ENCODE measurements at regions of chr9 and their contacts with region 1.

Region 1: GRCh38 chr9:127130661-127131538 is 8.5 kb upstream of the ANGPTL2 start:
- DNase-seq: peak; percentile 44
- H3K4me3 ChIP-seq: no peak overlapping the region
- H3K27ac ChIP-seq: peak overlapping the region; percentile 80 to 85 (median 82)
- H3K4me1 ChIP-seq: peaks cover 7 to 45% (median 20%) of the 10 kb centered on the region in 4 donors
- H3K27me3 ChIP-seq: no peaks in the 10 kb centered on the region
- CTCF ChIP-seq: no peak
- EP300 ChIP-seq: no peak
- POLR2A ChIP-seq: no peak

Region 2: DNA sequence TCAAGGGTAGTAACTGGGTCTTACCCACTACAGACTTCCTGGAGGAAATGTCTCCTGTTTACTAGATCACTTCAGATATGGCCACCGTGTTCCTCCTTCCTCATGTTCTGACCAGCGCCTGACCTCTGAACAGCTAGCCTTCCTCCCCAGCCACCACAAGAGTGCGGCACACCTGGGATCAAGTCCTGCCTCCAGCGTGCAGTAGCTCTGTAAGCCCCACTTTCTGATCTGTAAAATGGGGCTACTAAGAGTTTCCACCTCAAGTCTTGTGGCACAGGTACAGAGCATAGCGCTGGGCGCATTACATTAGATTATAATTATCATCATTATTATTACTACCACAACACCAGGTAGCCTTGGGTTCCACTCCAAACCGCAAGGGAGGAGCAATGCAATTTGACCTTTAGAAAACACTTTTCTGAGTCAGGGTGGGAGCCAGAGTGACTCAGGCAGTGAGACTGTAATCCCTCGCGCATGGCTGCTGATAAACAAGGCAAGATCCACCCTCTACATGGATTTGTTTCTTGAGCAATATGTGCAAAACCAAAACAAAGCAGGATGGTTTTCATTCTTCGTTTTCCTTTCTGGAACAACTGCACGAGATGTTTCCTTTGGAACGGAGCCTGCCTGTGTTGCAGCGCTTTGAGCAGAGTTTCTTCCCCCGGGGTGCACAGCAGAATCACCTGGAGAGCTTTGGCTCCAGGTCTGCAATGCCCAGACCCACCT is 56.5 kb after region 1 on chr9:
- in situ Hi-C with region 1: no loop called
- intact Hi-C with region 1: loop called (anchors 5 kb)
- DNase-seq: peak; percentile 54
- H3K4me3 ChIP-seq: no peak overlapping the region
- H3K27ac ChIP-seq: peak overlapping the region; percentile 84 to 89 (median 84)
- H3K4me1 ChIP-seq: peaks cover 13 to 31% (median 22%) of the 10 kb centered on the region in 4 donors
- H3K27me3 ChIP-seq: no peaks in the 10 kb centered on the region
- CTCF ChIP-seq: no peak
- EP300 ChIP-seq: no peak
- POLR2A ChIP-seq: no peak

Measured in transverse colon (tissue), 4 donors.